ENCODE measurements at regions of chr4 and their contacts with region 1.

Region 1: DNA sequence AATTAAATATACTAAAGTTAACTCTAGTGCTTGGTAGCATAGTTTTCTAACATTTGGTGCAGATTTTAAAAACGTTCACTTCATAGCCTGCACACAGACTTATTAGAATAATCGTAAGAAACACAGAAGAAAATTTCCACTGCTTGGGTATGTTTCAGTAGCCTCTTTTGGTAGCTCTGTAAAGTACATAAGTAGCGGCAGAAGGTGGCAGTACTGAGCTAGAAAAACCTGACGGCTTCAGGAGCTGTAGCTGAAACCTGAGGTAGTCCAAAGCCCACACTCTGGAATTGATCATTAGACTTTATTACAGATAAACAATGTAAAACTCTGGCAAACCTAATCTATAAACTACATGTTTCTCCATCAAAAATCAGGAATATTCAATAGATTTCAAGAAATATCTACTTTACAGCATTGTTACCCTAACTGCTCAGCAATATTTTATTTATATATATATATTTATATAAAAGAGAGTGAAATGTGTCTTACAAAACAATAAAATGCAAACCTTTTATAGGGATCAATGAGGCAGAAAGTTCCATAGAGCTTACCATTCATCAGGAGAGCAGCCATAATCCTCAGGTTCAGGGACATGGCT is 88.2 kb downstream of the ATP8A1 start:
- DNase-seq: peak; percentile 53
- CTCF ChIP-seq: peak; percentile 69

Region 2: DNA sequence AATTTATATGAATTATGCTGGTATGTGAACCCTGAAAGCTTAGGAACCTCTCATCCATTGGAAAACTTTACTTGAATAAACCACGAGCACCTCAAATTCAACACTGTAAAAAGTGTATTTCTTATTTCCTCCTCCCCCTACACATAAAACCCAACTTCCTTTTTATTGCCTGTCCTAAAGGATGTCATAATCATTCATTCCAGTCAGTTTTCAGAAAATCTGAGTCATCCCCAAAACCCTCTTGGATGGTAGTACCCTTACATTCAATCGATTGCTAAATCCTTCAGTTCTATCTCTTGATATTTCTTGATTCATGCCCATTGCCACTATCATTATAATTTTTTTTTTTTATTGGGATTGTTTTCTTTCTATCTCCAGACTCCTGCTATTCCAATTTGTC is 179.3 kb after region 1 on chr4:
- in situ Hi-C with region 1: loop called (anchors 10 kb)
- DNase-seq: no peak
- CTCF ChIP-seq: no peak

Region 3: DNA sequence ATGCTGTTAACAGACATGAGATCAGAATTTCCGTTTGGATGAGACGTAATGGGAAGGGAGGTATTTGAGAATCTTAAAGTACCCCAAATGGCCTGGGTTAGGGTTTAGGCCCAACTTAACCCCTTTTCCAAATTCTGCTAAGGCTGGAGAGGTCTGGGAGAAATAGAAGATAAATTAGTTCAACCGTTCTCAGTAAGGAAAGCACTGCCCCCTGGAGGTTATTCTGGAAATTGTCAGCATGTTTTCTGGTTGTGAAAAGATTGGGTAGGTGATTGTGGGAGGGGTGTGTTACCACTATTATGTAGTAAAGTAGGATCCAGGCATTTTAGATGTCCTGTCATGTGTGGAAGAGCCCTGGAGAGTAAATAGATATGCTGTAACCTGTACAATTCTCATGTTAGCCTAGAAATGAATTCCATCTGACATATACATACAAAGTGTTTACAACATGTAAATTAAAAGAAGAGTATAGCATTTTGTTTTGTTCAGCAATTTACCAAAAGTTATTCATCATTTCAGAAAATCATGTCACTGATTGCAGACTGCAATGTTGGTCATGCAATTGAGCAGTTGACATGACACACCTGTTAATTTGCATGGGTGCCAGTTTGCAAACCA is 297.0 kb after region 1 on chr4:
- in situ Hi-C with region 1: loop called (anchors 25 kb)
- DNase-seq: peak; percentile 28
- CTCF ChIP-seq: peak; percentile 68

Measured in GM13977 (cell line).